ENCODE measurements at regions of chr12 and their contacts with region 1.

Region 1: DNA sequence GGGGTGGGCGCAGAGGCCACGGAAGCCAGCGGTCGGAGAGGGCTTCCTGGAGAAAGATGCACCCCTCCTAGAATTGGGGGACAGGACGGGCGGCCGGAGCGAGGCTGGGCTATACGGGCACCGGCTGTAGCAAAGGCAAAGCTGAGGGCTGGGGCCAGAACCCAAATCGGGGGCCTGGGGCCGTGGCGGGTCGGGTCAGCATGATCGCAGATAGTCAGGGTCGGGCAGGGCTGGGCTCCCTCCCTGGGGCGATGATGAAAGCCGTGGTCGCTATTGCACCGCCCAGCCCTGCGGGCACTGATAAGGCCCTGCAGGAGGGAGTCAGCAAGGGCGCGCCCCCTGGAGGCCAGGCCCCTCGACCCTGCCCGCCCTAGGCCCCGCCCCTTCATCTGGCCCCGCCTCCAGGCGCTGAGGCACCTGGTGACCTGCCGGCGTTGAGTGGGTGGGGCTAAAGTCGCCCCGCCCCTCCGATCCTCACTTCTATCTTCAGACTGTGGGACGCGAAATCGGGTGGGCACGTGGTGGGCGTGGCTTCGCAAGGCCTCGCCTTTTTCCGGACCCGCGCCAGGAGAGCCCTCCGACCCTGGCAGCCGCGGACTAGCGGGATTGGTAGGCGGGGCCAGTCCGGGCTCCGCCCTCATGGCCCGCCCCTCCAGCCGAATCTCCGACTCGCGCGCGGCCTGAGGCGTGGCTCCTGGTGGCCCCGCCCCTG is 418 bp upstream of the SH2B3 start:
- DNase-seq: peak; percentile 98
- H3K4me3 ChIP-seq: peak overlapping the region in 1 of 3 experiments; percentile 91
- H3K27ac ChIP-seq: peak overlapping the region; percentile 37
- H3K4me1 ChIP-seq: peaks cover 45% of the 10 kb centered on the region
- H3K27me3 ChIP-seq: no peaks in the 10 kb centered on the region
- CTCF ChIP-seq: peak; percentile 50 to 72
- POLR2A ChIP-seq: no peak

Region 2: GRCh38 chr12:111428728-111429175 is 23.4 kb after region 1 on chr12:
- CTCF ChIA-PET with region 1: interaction called, 9 read pairs
- POLR2A ChIA-PET with region 1: no interaction called
- dilution Hi-C with region 1: no loop called
- intact Hi-C with region 1: loop called (anchors 1 kb)
- DNase-seq: peak; percentile 73
- H3K4me3 ChIP-seq: no peak overlapping the region
- H3K27ac ChIP-seq: peak overlapping the region; percentile 72
- H3K4me1 ChIP-seq: peaks cover 86% of the 10 kb centered on the region
- H3K27me3 ChIP-seq: no peaks in the 10 kb centered on the region
- CTCF ChIP-seq: no peak
- POLR2A ChIP-seq: no peak

Region 3: DNA sequence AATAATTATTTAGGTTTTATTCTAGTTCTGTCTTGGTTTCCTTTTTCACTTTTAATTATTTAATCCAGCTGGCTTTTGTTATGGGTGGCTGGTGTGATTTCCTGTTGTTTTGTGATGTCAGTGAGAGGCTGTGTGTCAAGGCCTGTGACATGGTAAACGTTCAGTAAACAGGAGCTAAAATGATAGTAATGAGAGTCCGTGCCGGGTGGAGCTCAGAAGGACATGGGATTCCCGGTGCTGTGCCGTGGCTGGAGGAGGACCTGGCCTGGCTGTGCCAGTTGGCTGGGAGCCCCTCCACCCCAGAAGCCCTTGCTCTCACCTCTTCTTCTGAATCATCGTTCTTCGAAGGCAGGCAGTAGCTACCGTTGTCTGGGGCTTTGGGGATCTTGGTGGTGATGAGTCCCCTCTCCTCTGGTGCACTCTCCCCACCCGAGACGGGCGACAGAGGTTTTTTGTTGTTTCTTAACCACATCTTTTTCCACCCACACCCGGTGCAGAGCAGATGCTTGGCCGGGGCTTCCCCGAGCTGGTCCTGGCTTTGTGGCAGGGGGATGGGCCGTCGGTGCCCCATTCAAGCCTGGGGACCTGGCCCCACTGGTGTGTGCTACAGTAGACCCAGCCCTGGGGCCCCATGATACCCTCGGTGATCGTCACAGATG is 29.5 kb after region 1 on chr12:
- CTCF ChIA-PET with region 1: interaction called, 12 read pairs
- POLR2A ChIA-PET with region 1: no interaction called
- dilution Hi-C with region 1: no loop called
- intact Hi-C with region 1: loop called (anchors 1 kb)
- DNase-seq: peak; percentile 83
- H3K4me3 ChIP-seq: peak overlapping the region in 1 of 3 experiments; percentile 27
- H3K27ac ChIP-seq: peak overlapping the region; percentile 85
- H3K4me1 ChIP-seq: peaks cover 90% of the 10 kb centered on the region
- H3K27me3 ChIP-seq: no peaks in the 10 kb centered on the region
- CTCF ChIP-seq: no peak
- POLR2A ChIP-seq: no peak

Region 4: DNA sequence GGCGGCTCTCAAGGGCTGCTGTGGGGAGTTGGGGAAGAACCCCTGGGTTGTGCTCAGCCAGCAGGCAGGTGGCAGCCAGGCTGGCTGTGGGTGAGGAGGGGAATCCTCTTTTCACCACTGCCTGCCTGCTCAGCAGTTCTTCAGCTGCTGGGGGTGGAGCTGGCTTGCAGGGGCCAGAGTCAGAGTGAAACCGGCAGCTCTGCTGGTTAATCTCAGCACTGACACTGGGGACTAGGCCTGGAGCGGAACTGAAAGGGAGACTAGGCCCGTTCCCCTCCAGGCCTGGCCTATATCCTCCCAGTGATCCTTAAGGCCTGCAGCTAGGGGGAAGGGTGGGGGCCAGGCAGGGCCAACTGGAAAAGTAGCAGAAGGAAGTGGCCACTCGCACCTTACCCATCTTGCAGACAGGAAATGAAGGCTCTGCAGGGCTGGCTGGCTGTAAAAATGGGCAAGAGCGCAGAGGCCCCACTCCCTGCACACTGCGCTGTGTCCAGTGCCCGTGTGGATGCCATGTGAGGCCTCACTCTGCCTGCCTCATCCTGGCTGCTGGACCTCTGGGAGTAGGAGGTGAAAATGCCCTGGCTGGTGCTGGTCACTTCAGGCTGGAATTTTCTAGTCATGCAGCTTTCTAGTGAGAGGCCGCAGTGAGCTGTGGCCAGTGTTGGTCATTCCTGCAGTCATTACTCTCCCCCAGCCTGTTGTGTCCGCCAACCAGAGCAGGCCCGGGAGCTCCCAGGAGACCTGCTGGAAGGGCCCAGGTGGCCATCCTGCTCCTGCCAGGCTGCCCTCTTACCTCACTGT is 39.8 kb after region 1 on chr12:
- CTCF ChIA-PET with region 1: interaction called, 464 read pairs
- POLR2A ChIA-PET with region 1: interaction called, 5 read pairs
- dilution Hi-C with region 1: no loop called
- intact Hi-C with region 1: loop called (anchors 1 kb)
- DNase-seq: no peak
- H3K4me3 ChIP-seq: no peak overlapping the region
- H3K27ac ChIP-seq: peak overlapping the region; percentile 81
- H3K4me1 ChIP-seq: peaks cover 59% of the 10 kb centered on the region
- H3K27me3 ChIP-seq: no peaks in the 10 kb centered on the region
- CTCF ChIP-seq: no peak
- POLR2A ChIP-seq: peak; percentile 28

Region 5: DNA sequence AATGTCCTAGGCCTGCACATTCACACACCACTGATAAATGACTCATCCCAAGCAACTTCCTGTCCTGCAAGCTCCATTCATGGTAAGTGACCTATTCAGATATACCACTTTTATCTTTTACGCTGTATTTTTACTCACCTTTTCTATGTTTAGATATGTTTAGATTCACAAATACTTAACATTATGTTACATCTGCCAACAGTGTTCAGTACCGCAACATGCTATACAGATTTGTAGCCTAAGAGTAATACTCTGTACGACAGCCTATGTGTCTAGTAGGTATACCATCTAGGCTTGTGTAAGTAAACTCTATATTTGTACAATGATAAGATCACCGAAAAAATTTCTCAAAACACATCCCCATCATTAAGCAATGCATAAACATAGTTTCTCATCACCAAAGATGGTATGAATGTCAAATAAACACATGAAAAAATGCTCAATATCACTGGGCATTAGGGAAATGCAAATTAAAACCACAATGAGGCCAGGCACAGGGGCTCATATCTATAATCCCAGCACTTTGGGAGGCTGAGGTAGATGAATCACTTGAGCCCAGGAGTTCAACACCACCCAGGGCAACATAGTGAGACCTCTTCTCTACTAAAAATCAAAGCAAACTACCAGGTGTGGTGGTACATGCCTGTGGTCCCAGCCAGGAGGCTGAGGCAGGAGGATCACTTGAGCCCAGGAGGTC is 173.1 kb after region 1 on chr12:
- CTCF ChIA-PET with region 1: no interaction called
- POLR2A ChIA-PET with region 1: no interaction called
- dilution Hi-C with region 1: no loop called
- intact Hi-C with region 1: no loop called
- DNase-seq: peak; percentile 64
- H3K4me3 ChIP-seq: no peak overlapping the region
- H3K27ac ChIP-seq: peak overlapping the region; percentile 66
- H3K4me1 ChIP-seq: peaks cover 11% of the 10 kb centered on the region
- H3K27me3 ChIP-seq: no peaks in the 10 kb centered on the region
- CTCF ChIP-seq: no peak
- POLR2A ChIP-seq: no peak

Region 6: DNA sequence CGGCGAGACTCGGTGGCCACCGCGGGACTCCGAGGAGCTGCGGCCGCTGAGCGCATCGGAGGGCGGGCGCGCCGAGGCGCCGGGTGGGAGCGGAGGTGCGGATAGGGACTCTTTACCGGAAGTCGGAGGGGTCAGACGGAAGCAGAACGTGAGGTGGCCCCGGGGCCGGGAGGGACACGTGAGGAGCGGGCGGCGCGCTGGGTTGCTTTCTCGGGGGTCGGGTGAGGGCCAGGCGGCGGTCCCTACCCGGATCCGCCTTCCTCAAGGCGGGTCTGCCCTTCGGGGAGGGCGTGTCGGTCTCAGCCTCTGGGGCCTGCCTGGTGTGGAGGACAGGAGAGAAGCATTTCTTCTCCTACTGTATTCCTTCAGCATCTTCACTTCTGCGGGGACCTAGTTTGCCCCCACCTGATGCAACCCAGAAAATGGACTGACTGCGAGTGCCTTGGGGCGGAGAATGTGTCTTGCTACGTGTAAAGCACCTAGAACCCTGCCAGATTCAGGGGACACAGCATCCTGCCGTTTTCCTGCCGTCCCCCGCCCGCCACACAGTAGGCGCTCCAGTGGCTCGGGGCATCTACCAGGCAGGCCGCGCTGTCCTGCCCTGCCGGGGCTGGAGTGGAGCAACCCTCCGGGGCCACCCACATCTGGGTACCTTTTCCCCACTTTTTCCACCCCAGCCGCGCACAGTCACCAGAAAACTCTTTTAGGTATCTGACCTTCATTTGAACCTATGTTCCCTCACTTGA is 194.3 kb after region 1 on chr12:
- CTCF ChIA-PET with region 1: no interaction called
- POLR2A ChIA-PET with region 1: no interaction called
- dilution Hi-C with region 1: no loop called
- intact Hi-C with region 1: loop called (anchors 5 kb)
- DNase-seq: peak; percentile 89
- H3K4me3 ChIP-seq: peak overlapping the region; percentile 17 to 85 (median 44)
- H3K27ac ChIP-seq: peak overlapping the region; percentile 80
- H3K4me1 ChIP-seq: peaks cover 24% of the 10 kb centered on the region
- H3K27me3 ChIP-seq: no peaks in the 10 kb centered on the region
- CTCF ChIP-seq: no peak
- POLR2A ChIP-seq: peak; percentile 81